Activated CD4-positive, alpha-beta T cell treated with anti-CD3 and anti-CD28 coated beads, Interleukin-2, amount 10 ng/mL, durations not matched to agents 7 days and 5 days (primary cell): ENCODE measurements at regions of chr15 and their contacts with region 1.

Region 1: GRCh38 chr15:65902378-65902777 is 33.1 kb downstream of the RAB11A start:
- DNase-seq: peak; percentile 9
- H3K4me3 Mint-ChIP-seq: no peak overlapping the region
- H3K27ac Mint-ChIP-seq: peak overlapping the region; percentile 14
- H3K4me1 Mint-ChIP-seq: peaks cover 24% of the 10 kb centered on the region
- H3K27me3 Mint-ChIP-seq: no peaks in the 10 kb centered on the region

Region 2: DNA sequence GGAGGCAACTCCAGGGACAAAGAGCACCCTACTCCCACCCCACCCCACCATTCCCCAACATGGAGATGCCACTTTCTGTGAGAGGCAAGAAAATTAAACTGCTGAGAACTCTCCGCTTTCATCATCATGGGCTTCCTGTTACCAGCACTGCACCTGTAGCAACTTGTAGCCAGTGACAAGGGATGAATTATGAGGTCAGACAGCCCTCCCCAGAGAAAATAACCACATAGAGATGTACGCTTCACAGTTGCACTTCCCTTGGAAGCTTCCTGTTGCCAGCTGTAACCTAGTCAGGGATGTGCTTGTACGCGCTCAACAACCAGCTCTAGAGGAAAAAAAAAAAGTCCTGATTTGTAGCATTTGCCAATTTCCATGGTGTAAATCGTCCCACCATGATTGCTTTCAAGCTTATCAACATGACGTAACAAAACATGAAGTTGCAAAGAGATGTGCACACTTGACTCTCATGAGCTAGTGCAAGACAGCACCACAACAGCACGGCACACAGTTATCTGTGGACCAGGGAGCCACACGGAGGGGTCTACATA is 112.3 kb after region 1 on chr15:
- CTCF ChIA-PET with region 1: no interaction called
- POLR2A ChIA-PET with region 1: interaction called, 10 read pairs
- DNase-seq: no peak
- H3K4me3 Mint-ChIP-seq: no peak overlapping the region
- H3K27ac Mint-ChIP-seq: no peak overlapping the region
- H3K4me1 Mint-ChIP-seq: no peaks in the 10 kb centered on the region
- H3K27me3 Mint-ChIP-seq: peaks cover 10% of the 10 kb centered on the region